Activated CD4-positive, alpha-beta memory T cell treated with anti-CD3 and anti-CD28 coated beads for 36 hours (primary cell): ENCODE measurements at regions of chr6 and their contacts with region 1.

Region 1: GRCh38 chr6:26045065-26045927 is 41.9 kb upstream of the HFE start:
- DNase-seq: peak; percentile 81
- H3K4me3 Mint-ChIP-seq: peak overlapping the region; percentile 81
- H3K27ac Mint-ChIP-seq: peak overlapping the region; percentile 97
- H3K4me1 Mint-ChIP-seq: peaks cover 17% of the 10 kb centered on the region
- H3K27me3 Mint-ChIP-seq: peaks cover 8% of the 10 kb centered on the region

Region 2: GRCh38 chr6:26025894-26026832 is 19.1 kb before region 1 on chr6:
- CTCF ChIA-PET with region 1: interaction called, 68 read pairs
- POLR2A ChIA-PET with region 1: interaction called, 675 read pairs
- intact Hi-C with region 1: loop called (anchors 1 kb)
- DNase-seq: peak; percentile 96
- H3K4me3 Mint-ChIP-seq: peak overlapping the region; percentile 87
- H3K27ac Mint-ChIP-seq: peak overlapping the region; percentile 91
- H3K4me1 Mint-ChIP-seq: peaks cover 53% of the 10 kb centered on the region
- H3K27me3 Mint-ChIP-seq: peaks cover 5% of the 10 kb centered on the region

Region 3: DNA sequence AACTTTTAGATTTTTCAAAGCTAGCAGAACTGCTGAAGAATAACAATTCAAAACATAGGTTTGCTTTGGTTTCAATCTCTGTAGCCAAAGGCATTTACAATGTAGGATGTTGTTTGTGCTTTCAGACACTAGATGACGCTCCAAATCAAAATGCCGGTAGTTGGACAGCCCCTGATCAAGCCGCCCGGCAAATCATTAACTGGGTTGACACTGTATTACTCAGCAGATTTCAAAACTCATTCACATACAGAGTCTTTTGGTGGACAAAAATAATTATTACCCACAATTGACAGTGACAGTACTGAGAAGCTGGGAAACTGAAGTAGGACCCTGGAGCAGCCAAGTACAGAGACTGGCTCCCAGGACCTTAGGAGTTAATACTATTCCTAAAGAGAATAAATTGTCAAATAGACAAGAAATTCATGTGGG is 20.7 kb after region 1 on chr6:
- CTCF ChIA-PET with region 1: interaction called, 12 read pairs
- POLR2A ChIA-PET with region 1: interaction called, 4 read pairs
- intact Hi-C with region 1: no loop called
- DNase-seq: peak; percentile 65
- H3K4me3 Mint-ChIP-seq: no peak overlapping the region
- H3K27ac Mint-ChIP-seq: no peak overlapping the region
- H3K4me1 Mint-ChIP-seq: peaks cover 4% of the 10 kb centered on the region
- H3K27me3 Mint-ChIP-seq: no peaks in the 10 kb centered on the region

Region 4: DNA sequence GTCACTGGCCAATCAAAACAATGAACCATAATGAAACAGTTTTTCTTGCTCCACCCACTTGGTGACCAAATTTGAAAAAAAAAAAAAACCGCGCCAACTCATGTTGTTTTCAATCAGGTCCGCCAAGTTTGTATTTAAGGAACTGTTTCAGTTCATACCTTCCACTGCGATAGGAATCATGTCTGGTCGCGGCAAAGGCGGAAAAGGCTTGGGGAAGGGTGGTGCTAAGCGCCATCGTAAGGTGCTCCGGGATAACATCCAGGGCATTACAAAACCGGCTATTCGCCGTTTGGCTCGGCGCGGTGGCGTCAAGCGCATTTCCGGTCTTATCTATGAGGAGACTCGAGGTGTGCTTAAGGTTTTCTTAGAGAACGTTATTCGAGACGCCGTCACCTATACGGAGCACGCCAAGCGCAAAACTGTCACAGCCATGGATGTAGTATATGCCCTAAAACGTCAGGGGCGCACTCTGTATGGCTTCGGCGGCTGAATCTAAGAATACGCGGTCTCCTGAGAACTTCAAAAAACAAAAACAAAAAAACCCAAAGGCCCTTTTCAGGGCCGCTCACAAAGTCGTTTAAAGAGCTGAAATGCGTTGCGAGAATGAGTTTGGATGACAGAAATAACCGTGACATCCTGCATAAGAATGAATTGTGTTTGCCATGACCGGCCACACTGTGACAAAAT is 58.6 kb after region 1 on chr6:
- CTCF ChIA-PET with region 1: no interaction called
- POLR2A ChIA-PET with region 1: interaction called, 29 read pairs
- intact Hi-C with region 1: no loop called
- DNase-seq: peak; percentile 93
- H3K4me3 Mint-ChIP-seq: peak overlapping the region; percentile 80
- H3K27ac Mint-ChIP-seq: peak overlapping the region; percentile 93
- H3K4me1 Mint-ChIP-seq: peaks cover 18% of the 10 kb centered on the region
- H3K27me3 Mint-ChIP-seq: peaks cover 3% of the 10 kb centered on the region

Region 5: DNA sequence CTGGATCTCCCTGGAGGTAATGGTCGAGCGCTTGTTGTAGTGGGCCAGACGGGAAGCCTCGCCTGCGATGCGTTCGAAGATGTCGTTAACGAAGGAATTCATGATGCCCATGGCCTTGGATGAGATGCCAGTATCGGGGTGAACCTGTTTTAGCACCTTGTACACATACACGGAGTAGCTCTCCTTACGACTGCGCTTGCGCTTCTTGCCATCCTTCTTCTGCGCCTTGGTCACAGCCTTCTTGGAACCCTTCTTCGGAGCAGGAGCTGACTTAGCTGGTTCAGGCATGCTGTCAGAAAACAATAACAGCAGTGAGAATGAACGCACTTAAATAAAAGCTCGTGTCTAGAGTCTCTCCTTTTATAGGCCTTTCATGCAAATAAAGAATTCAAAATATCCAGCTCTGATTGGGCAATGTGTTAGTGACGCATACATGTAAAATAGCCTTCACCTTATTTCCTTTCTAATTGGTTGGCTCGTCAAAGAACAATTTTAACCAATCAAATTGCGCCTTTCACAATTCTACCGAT is 171.1 kb after region 1 on chr6:
- CTCF ChIA-PET with region 1: no interaction called
- POLR2A ChIA-PET with region 1: interaction called, 14 read pairs
- intact Hi-C with region 1: no loop called
- DNase-seq: peak; percentile 89
- H3K4me3 Mint-ChIP-seq: no peak overlapping the region
- H3K27ac Mint-ChIP-seq: no peak overlapping the region
- H3K4me1 Mint-ChIP-seq: peaks cover 5% of the 10 kb centered on the region
- H3K27me3 Mint-ChIP-seq: no peaks in the 10 kb centered on the region

Region 6: GRCh38 chr6:27864906-27865849 is 1819.9 kb after region 1 on chr6:
- CTCF ChIA-PET with region 1: no interaction called
- POLR2A ChIA-PET with region 1: interaction called, 10 read pairs
- intact Hi-C with region 1: no loop called
- DNase-seq: peak; percentile 85
- H3K4me3 Mint-ChIP-seq: peak overlapping the region; percentile 96
- H3K27ac Mint-ChIP-seq: peak overlapping the region; percentile 100
- H3K4me1 Mint-ChIP-seq: peaks cover 38% of the 10 kb centered on the region
- H3K27me3 Mint-ChIP-seq: peaks cover 20% of the 10 kb centered on the region